Mammary epithelial cell (primary cell): ENCODE measurements at regions of chr2 and their contacts with region 1.

Region 1: DNA sequence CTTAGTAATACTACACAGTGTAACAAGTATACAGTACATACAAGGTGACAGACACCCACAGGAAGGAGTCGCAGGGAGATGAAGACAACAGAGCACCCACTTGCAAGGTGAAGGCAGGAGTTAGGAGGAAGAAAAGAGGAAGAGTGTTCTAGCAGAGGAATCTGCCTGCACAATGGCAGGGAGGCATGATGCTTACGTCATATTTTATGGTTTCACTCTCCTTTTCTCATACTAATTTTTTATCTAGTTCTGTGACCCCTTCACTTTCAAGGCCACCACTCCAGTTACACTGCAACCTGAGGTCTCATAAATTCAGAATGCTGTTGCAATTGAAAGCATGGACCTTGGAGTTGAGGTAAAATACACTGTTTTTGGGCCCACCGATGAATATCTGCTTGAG is 331.7 kb downstream of the MEIS1 start:
- DNase-seq: no peak
- H3K4me3 ChIP-seq: no peak overlapping the region
- H3K27ac ChIP-seq: no peak overlapping the region
- H3K4me1 ChIP-seq: no peaks in the 10 kb centered on the region
- H3K27me3 ChIP-seq: no peaks in the 10 kb centered on the region
- CTCF ChIP-seq: no peak

Region 2: DNA sequence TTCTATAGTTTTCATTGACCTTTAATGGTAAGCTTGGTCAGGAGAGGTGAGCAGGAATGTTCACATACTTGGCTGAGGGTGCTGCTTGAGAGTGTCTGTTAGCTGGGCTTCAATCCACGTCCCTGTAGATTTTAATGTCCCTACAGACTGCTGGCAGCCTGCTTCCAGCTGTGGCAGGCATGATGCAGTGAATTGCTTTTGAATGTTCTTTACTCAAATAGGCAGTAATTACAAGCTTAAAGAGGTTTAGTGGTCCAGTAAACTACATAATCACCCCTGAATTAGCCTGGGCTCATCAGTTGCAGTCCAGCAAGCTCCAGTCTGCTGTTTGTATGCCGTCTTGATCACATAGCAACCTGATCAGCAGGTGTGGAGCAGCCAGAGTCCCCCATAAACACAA is 229.6 kb before region 1 on chr2:
- CTCF ChIA-PET with region 1: no interaction called
- dilution Hi-C with region 1: no loop called
- in situ Hi-C with region 1: no loop called
- intact Hi-C with region 1: no loop called
- DNase-seq: no peak
- H3K4me3 ChIP-seq: no peak overlapping the region
- H3K27ac ChIP-seq: no peak overlapping the region
- H3K4me1 ChIP-seq: no peaks in the 10 kb centered on the region
- H3K27me3 ChIP-seq: no peaks in the 10 kb centered on the region
- CTCF ChIP-seq: no peak

Region 3: GRCh38 chr2:66686755-66687154 is 79.8 kb before region 1 on chr2:
- CTCF ChIA-PET with region 1: no interaction called
- dilution Hi-C with region 1: no loop called
- in situ Hi-C with region 1: no loop called
- intact Hi-C with region 1: no loop called
- DNase-seq: peak; percentile 43
- H3K4me3 ChIP-seq: no peak overlapping the region
- H3K27ac ChIP-seq: no peak overlapping the region
- H3K4me1 ChIP-seq: peaks cover 6% of the 10 kb centered on the region
- H3K27me3 ChIP-seq: no peaks in the 10 kb centered on the region
- CTCF ChIP-seq: no peak

Region 4: GRCh38 chr2:66729416-66730300 is 36.9 kb before region 1 on chr2:
- CTCF ChIA-PET with region 1: no interaction called
- dilution Hi-C with region 1: no loop called
- in situ Hi-C with region 1: no loop called
- intact Hi-C with region 1: loop called (anchors 1 kb)
- DNase-seq: peak; percentile 14
- H3K4me3 ChIP-seq: no peak overlapping the region
- H3K27ac ChIP-seq: no peak overlapping the region
- H3K4me1 ChIP-seq: no peaks in the 10 kb centered on the region
- H3K27me3 ChIP-seq: no peaks in the 10 kb centered on the region
- CTCF ChIP-seq: no peak